ENCODE measurements at regions of chr2 and their contacts with region 1.

Region 1: GRCh38 chr2:197113275-197113711 is 186.8 kb upstream of the PGAP1 start:
- DNase-seq: peak in 2 of 5 donors; percentile 29 to 38
- H3K4me3 ChIP-seq: no peak overlapping the region
- H3K4me3 Mint-ChIP-seq: no peak overlapping the region
- H3K27ac ChIP-seq: no peak overlapping the region
- H3K27ac Mint-ChIP-seq: peak overlapping the region in 7 of 8 donors; percentile 14 to 82 (median 75)
- H3K4me1 ChIP-seq: peaks cover 19% of the 10 kb centered on the region
- H3K4me1 Mint-ChIP-seq: peaks cover 26 to 43% (median 39%) of the 10 kb centered on the region in 3 donors
- H3K27me3 ChIP-seq: no peaks in the 10 kb centered on the region
- H3K27me3 Mint-ChIP-seq: no peaks in the 10 kb centered on the region

Region 2: DNA sequence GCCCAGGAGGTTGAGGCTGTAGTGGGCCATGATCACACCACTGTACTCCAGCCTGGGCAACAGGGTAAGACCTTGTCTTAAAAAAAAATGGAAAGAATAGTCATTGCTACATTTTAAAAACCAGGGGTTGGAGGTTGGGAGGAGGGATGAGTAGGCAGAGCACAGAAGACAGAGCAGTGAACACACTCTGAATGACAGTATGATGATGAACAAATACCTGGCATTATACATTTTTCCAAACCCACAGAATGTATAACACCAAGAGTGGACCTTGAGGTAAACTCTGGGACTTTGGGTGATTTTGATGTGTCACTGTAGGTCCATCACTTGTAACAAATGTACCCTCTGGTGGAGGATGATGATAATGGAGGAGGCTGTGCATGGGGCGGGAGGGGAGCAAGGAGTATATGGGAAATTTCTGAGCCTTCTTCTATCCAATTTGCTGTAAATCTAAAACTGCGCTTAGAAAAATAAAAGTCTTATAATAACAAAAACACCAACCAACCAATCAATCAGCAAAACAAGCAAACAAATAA is 75.4 kb before region 1 on chr2:
- CTCF ChIA-PET with region 1: no interaction called
- POLR2A ChIA-PET with region 1: no interaction called
- DNase-seq: no peak
- H3K4me3 ChIP-seq: no peak overlapping the region
- H3K4me3 Mint-ChIP-seq: no peak overlapping the region
- H3K27ac ChIP-seq: no peak overlapping the region
- H3K27ac Mint-ChIP-seq: peak overlapping the region in 6 of 8 donors; percentile 31 to 86 (median 51)
- H3K4me1 ChIP-seq: peaks cover 7% of the 10 kb centered on the region
- H3K4me1 Mint-ChIP-seq: peaks cover 43 to 63% (median 55%) of the 10 kb centered on the region in 3 donors
- H3K27me3 ChIP-seq: no peaks in the 10 kb centered on the region
- H3K27me3 Mint-ChIP-seq: peaks cover 0 to 4% of the 10 kb centered on the region in 2 donors

Region 3: GRCh38 chr2:197128126-197128525 is 14.8 kb after region 1 on chr2:
- CTCF ChIA-PET with region 1: interaction called, 13 read pairs
- POLR2A ChIA-PET with region 1: no interaction called
- DNase-seq: no peak
- H3K4me3 ChIP-seq: no peak overlapping the region
- H3K4me3 Mint-ChIP-seq: peak overlapping the region in 2 of 7 donors; percentile 11 to 50
- H3K27ac ChIP-seq: no peak overlapping the region
- H3K27ac Mint-ChIP-seq: peak overlapping the region; percentile 19 to 80 (median 58)
- H3K4me1 ChIP-seq: peaks cover 58% of the 10 kb centered on the region
- H3K4me1 Mint-ChIP-seq: peaks cover 47 to 83% (median 77%) of the 10 kb centered on the region in 3 donors
- H3K27me3 ChIP-seq: no peaks in the 10 kb centered on the region
- H3K27me3 Mint-ChIP-seq: no peaks in the 10 kb centered on the region

Region 4: DNA sequence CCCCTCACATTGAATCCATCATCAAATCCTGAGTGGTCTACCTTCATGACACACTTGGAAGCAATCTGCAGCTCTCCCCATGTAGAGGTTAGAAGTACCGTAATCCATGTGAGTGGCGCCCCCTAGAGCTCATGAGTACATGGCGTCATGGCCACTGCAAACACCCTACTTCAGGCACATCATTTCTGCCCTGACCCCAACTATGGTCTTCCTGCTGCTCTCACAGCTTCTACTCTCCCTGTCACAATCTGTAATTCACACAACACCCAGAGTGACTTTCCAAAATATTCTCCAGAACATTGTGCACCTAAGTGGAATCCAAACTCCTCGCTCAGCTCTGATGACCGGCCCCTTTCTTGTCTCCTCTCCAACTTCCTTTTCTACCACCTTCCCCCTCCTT is 55.4 kb after region 1 on chr2:
- CTCF ChIA-PET with region 1: interaction called, 24 read pairs
- POLR2A ChIA-PET with region 1: no interaction called
- DNase-seq: peak; percentile 48 to 71 (median 57)
- H3K4me3 ChIP-seq: no peak overlapping the region
- H3K4me3 Mint-ChIP-seq: peak overlapping the region in 4 of 7 donors; percentile 9 to 34 (median 20)
- H3K27ac ChIP-seq: no peak overlapping the region
- H3K27ac Mint-ChIP-seq: peak overlapping the region; percentile 28 to 87 (median 72)
- H3K4me1 ChIP-seq: peaks cover 68% of the 10 kb centered on the region
- H3K4me1 Mint-ChIP-seq: peaks cover 68 to 86% (median 78%) of the 10 kb centered on the region in 3 donors
- H3K27me3 ChIP-seq: no peaks in the 10 kb centered on the region
- H3K27me3 Mint-ChIP-seq: no peaks in the 10 kb centered on the region

Region 5: GRCh38 chr2:197198890-197199289 is 85.6 kb after region 1 on chr2:
- CTCF ChIA-PET with region 1: interaction called, 11 read pairs
- POLR2A ChIA-PET with region 1: no interaction called
- DNase-seq: peak; percentile 77 to 97 (median 96)
- H3K4me3 ChIP-seq: peak overlapping the region; percentile 35
- H3K4me3 Mint-ChIP-seq: peak overlapping the region; percentile 88 to 94 (median 93)
- H3K27ac ChIP-seq: peak overlapping the region; percentile 52
- H3K27ac Mint-ChIP-seq: peak overlapping the region; percentile 88 to 99 (median 97)
- H3K4me1 ChIP-seq: peaks cover 91% of the 10 kb centered on the region
- H3K4me1 Mint-ChIP-seq: peaks cover 92 to 97% (median 96%) of the 10 kb centered on the region in 3 donors
- H3K27me3 ChIP-seq: no peaks in the 10 kb centered on the region
- H3K27me3 Mint-ChIP-seq: no peaks in the 10 kb centered on the region

Region 6: GRCh38 chr2:197388866-197389587 is 275.7 kb after region 1 on chr2:
- CTCF ChIA-PET with region 1: interaction called, 12 read pairs
- POLR2A ChIA-PET with region 1: no interaction called
- DNase-seq: no peak
- H3K4me3 ChIP-seq: no peak overlapping the region
- H3K4me3 Mint-ChIP-seq: no peak overlapping the region
- H3K27ac ChIP-seq: no peak overlapping the region
- H3K27ac Mint-ChIP-seq: peak overlapping the region in 2 of 8 donors; percentile 40 to 44
- H3K4me1 ChIP-seq: peaks cover 1% of the 10 kb centered on the region
- H3K4me1 Mint-ChIP-seq: peaks cover 0 to 6% (median 5%) of the 10 kb centered on the region in 3 donors
- H3K27me3 ChIP-seq: no peaks in the 10 kb centered on the region
- H3K27me3 Mint-ChIP-seq: no peaks in the 10 kb centered on the region

Measured in CD8-positive, alpha-beta memory T cell (primary cell).